Dendritic cell treated with granulocyte-macrophage colony-stimulating factor and Interleukin-4, amounts not matched to agents 40 ng/mL and 50 ng/mL, for 4 days (primary cell): ENCODE measurements at regions of chr6 and their contacts with region 1.

Region 1: DNA sequence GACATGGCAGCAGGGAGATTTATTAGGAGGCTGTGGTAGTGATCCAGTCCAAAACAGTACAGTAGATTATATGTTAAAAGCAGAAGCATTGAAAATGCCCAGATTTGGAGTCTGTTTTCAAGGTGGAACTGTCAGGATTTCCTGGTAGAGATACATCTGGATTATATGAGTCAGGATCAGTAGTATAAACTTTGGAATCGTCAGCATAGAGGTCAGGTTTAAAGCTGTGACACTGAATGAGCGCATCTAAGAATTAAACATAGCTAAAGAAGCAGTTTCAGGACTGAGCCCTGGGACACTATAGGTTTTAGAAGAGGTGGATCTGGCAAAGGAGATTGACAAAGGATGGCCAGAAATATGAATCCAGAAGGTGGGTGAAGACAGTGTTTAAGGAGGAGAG is 60.4 kb downstream of the RNF144B start:
- H3K4me3 Mint-ChIP-seq: no peak overlapping the region
- H3K27ac Mint-ChIP-seq: no peak overlapping the region
- H3K4me1 Mint-ChIP-seq: peaks cover 33% of the 10 kb centered on the region
- H3K27me3 Mint-ChIP-seq: no peaks in the 10 kb centered on the region

Region 2: DNA sequence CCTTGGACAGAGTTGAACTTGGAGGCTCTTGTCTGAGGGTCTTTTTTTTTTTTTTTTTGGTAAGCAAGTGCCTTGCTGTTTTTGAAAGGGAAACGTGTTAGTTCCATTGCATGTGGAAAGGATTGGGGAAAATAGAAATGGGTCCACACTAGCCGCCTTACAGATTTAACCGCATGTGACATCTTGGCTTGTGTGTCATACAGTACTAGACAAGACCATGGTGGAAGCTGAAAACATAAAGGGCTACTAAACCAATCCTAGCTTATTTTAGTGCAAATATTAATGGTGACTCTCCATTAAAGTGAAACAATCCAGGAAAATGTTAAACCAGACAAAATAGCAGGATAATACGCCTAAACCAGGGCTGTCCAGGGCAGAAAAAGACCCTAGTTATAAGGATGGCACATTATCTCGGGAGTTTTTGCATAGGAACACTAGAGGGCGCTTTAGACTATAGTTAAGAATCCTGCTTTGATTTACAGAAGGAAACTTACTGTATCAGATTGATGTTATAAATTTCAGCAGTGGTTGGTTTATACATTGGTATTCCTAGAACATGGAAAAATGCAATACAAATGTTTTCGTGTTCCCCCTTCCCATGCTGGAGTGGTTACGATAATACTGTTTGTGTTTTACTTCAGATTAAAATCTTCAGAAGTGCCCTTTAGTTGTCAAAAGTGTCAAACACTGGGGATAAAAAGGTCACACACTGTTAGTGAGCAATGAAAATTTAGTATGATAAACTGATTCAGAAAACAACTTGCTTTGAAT is 123.4 kb before region 1 on chr6:
- intact Hi-C with region 1: no loop called
- H3K4me3 Mint-ChIP-seq: no peak overlapping the region
- H3K27ac Mint-ChIP-seq: peak overlapping the region; percentile 63
- H3K4me1 Mint-ChIP-seq: peaks cover 51% of the 10 kb centered on the region
- H3K27me3 Mint-ChIP-seq: no peaks in the 10 kb centered on the region

Region 3: GRCh38 chr6:18496462-18496861 is 48.9 kb after region 1 on chr6:
- intact Hi-C with region 1: loop called (anchors 5 kb)
- H3K4me3 Mint-ChIP-seq: no peak overlapping the region
- H3K27ac Mint-ChIP-seq: peak overlapping the region; percentile 7
- H3K4me1 Mint-ChIP-seq: peaks cover 48% of the 10 kb centered on the region
- H3K27me3 Mint-ChIP-seq: no peaks in the 10 kb centered on the region

Region 4: DNA sequence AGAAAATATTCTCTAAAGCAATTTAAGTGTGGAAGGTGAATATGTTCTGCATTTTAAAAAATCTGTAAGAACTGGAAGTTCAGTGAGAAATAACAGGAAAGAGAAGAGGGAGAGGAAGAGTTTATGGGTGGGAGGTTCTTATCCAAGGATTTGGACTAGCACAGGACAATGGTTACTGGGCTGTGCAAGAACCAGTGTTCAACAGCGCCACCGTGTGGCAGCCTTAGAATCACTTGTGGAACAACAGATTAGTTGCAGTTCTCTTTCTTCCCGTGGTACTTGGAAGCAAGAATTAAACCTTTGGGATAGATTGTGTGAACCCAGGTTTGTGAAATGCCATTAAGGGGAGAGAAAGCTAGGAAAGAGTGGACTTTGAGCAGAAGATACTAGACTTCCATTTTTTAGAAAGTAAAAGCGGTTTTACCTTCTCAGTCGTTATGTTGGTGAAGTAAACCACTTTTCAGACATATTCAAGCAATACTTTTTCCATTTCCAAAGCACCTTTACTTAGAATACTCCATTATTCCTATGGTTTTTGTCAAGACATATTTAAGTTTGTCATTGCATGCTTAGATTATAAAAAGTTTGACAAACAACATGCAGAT is 376.3 kb after region 1 on chr6:
- intact Hi-C with region 1: no loop called
- H3K4me3 Mint-ChIP-seq: no peak overlapping the region
- H3K27ac Mint-ChIP-seq: no peak overlapping the region
- H3K4me1 Mint-ChIP-seq: no peaks in the 10 kb centered on the region
- H3K27me3 Mint-ChIP-seq: no peaks in the 10 kb centered on the region